H1 (cell line): ENCODE measurements at regions of chr3 and their contacts with region 1.

Region 1: GRCh38 chr3:48556793-48557626 is at the start of gene PFKFB4:
- DNase-seq: peak; percentile 99 to 100
- H3K4me3 ChIP-seq: peak within 1 kb of the TSS; percentile 67 to 90 (median 73)
- H3K27ac ChIP-seq: peak within 1 kb of the TSS; percentile 67
- H3K4me1 ChIP-seq: peaks cover 4 to 33% (median 22%) of the 10 kb centered on the region in 4 experiments
- H3K27me3 ChIP-seq: no peaks in the 10 kb centered on the region
- CTCF ChIP-seq: peak in 1 of 3 experiments; percentile 36; a peak in 1 of 4 replicates
- EP300 ChIP-seq: no peak
- POLR2A ChIP-seq: peak in 1 of 2 experiments; percentile 82; a peak in 2 of 3 replicates
- RAD21 ChIP-seq: no peak
- total RNA-seq, gene PFKFB4: 10.7 and 11.3 TPM in 2 replicates

Region 2: GRCh38 chr3:48285132-48285531 is 271.9 kb before region 1 on chr3:
- CTCF ChIA-PET with region 1: no interaction called
- POLR2A ChIA-PET with region 1: no interaction called
- DNase-seq: no peak
- H3K4me3 ChIP-seq: no peak overlapping the region
- H3K27ac ChIP-seq: no peak overlapping the region
- H3K4me1 ChIP-seq: no peaks in the 10 kb centered on the region
- H3K27me3 ChIP-seq: no peaks in the 10 kb centered on the region; a peak in 1 of 7 replicates
- CTCF ChIP-seq: no peak
- EP300 ChIP-seq: no peak
- POLR2A ChIP-seq: no peak
- RAD21 ChIP-seq: no peak

Region 3: GRCh38 chr3:48571938-48572337 is 14.9 kb after region 1 on chr3:
- CTCF ChIA-PET with region 1: interaction called, 14 read pairs
- POLR2A ChIA-PET with region 1: interaction called, 9 read pairs
- DNase-seq: no peak
- H3K4me3 ChIP-seq: no peak overlapping the region
- H3K27ac ChIP-seq: no peak overlapping the region
- H3K4me1 ChIP-seq: no peaks in the 10 kb centered on the region
- H3K27me3 ChIP-seq: no peaks in the 10 kb centered on the region; a peak in 1 of 7 replicates
- CTCF ChIP-seq: no peak
- EP300 ChIP-seq: no peak
- POLR2A ChIP-seq: no peak
- RAD21 ChIP-seq: no peak

Region 4: DNA sequence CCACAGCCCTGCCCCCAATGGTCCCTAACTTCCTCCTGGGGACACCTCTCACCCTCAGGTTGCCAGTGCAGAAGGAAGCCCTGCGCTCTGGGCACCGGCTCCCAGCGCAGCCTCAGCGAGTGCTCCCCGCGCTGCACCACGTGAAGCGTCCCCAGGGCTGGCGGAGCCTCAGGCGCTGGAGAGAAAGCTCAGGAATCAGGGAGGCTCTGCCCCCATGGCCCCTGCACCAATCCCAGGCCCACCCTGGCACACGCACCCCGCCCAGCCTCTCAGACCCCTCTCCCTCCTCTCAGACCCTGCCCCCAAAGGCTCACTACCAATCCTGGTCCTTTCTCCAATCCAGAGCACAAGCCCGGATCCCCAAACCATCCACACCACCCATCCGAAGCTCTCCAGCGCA is 31.2 kb after region 1 on chr3:
- CTCF ChIA-PET with region 1: interaction called, 10 read pairs
- POLR2A ChIA-PET with region 1: interaction called, 5 read pairs
- DNase-seq: no peak
- H3K4me3 ChIP-seq: no peak overlapping the region
- H3K27ac ChIP-seq: no peak overlapping the region
- H3K4me1 ChIP-seq: peaks cover 0 to 6% (median 0%) of the 10 kb centered on the region in 4 experiments; a peak in 1 of 7 replicates
- H3K27me3 ChIP-seq: no peaks in the 10 kb centered on the region
- CTCF ChIP-seq: no peak
- EP300 ChIP-seq: no peak
- POLR2A ChIP-seq: no peak
- RAD21 ChIP-seq: no peak

Region 5: DNA sequence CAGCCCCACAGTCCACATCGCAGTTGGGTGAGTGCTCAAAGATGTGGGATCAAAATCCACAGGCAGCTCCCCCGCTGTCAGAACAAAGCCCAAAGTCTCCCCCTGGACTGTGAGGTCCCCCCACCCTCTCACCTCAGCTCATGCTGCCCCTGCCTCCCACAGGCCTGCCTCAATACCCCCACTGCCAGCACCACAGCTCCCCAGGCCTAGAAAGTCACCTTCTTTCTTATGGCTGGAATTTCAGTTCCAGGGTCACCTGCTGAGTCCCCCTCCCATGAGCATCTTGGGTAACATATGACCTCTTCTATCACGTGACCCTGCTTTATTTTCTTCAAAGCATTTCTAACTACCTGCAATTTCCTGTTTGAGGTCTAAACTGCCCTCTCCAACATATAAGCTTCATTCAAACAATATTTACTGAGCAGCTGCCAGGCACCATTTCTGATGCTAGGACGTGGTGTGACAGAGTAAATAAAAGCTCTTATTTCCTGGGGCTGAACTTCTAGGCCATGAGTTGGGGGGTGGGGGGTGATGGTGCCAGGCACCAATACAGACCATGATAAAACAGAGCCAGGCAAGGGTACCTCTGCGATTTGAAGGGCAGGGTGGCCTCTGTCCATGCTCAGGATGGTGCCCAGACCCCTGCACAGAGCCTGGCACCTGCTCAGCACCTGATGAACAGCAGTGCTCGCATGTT is 67.0 kb after region 1 on chr3:
- CTCF ChIA-PET with region 1: interaction called, 11 read pairs
- POLR2A ChIA-PET with region 1: interaction called, 4 read pairs
- DNase-seq: no peak
- H3K4me3 ChIP-seq: no peak overlapping the region
- H3K27ac ChIP-seq: peak overlapping the region; percentile 35; the same call in 1 of the 2 replicates
- H3K4me1 ChIP-seq: peaks cover 0 to 6% (median 3%) of the 10 kb centered on the region in 4 experiments; a peak in 3 of 7 replicates
- H3K27me3 ChIP-seq: no peaks in the 10 kb centered on the region
- CTCF ChIP-seq: no peak
- EP300 ChIP-seq: no peak
- POLR2A ChIP-seq: peak in 1 of 2 experiments; percentile 9; a peak in 1 of 3 replicates
- RAD21 ChIP-seq: no peak